ENCODE measurements at regions of chr18 and their contacts with region 1.

Region 1: GRCh38 chr18:9069601-9070000 is 32.9 kb upstream of the NDUFV2 start:
- DNase-seq: no peak
- H3K4me3 ChIP-seq: peak overlapping the region in 3 of 7 experiments; percentile 8 to 54 (median 36)
- H3K27ac ChIP-seq: peak overlapping the region in 1 of 2 experiments; percentile 39
- H3K4me1 ChIP-seq: peaks cover 9 to 31% (median 15%) of the 10 kb centered on the region in 4 experiments
- H3K27me3 ChIP-seq: no peaks in the 10 kb centered on the region

Region 2: GRCh38 chr18:8912348-8913326 is 157.0 kb before region 1 on chr18:
- CTCF ChIA-PET with region 1: no interaction called
- POLR2A ChIA-PET with region 1: no interaction called
- DNase-seq: peak in 1 of 3 donors; percentile 3
- H3K4me3 ChIP-seq: no peak overlapping the region
- H3K27ac ChIP-seq: peak overlapping the region in 1 of 2 experiments; percentile 86
- H3K4me1 ChIP-seq: no peaks in the 10 kb centered on the region
- H3K27me3 ChIP-seq: no peaks in the 10 kb centered on the region

Region 3: DNA sequence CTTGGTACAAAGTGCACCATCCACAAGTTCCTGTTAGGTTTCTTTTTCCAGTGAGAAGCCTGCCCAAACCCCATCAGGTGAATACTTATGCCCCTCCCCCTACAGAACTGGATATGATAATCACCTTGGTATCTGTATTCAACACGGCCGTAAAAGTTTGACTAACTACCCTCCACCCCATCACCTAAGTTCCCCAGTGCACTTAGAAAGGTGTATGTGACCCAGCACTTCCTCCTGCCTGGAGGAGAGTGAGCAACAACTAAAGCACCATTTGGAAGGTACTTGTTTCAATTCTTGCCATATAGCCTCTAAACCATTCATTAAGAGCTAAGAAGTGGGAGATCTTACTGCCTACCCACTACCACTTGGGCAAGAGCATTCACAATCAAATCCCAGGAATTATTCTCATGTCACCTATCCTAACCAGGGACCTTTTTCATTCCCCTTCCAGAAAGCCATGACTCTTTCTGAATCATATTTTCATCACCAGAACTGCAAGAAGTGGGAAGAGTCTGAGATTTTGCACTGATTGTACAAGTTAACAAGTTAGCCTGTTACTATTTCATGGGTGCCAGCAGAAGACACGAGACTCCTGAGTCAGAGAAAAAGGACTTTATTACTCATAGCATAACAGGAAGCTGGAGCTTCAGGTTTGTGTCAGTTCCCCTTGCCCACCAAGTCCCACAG is 20.6 kb before region 1 on chr18:
- CTCF ChIA-PET with region 1: no interaction called
- POLR2A ChIA-PET with region 1: no interaction called
- DNase-seq: no peak
- H3K4me3 ChIP-seq: no peak overlapping the region
- H3K27ac ChIP-seq: no peak overlapping the region
- H3K4me1 ChIP-seq: no peaks in the 10 kb centered on the region
- H3K27me3 ChIP-seq: no peaks in the 10 kb centered on the region

Region 4: GRCh38 chr18:9082711-9083510 is 13.3 kb after region 1 on chr18:
- CTCF ChIA-PET with region 1: interaction called, 12 read pairs
- POLR2A ChIA-PET with region 1: no interaction called
- DNase-seq: peak; percentile 22 to 68 (median 60)
- H3K4me3 ChIP-seq: peak overlapping the region in 4 of 7 experiments; percentile 2 to 42 (median 9)
- H3K27ac ChIP-seq: peak overlapping the region in 1 of 2 experiments; percentile 55
- H3K4me1 ChIP-seq: peaks cover 6 to 49% (median 30%) of the 10 kb centered on the region in 4 experiments
- H3K27me3 ChIP-seq: no peaks in the 10 kb centered on the region

Region 5: GRCh38 chr18:9102508-9103375 is 33.1 kb after region 1 on chr18 and contains the start of gene NDUFV2:
- CTCF ChIA-PET with region 1: interaction called, 12 read pairs
- POLR2A ChIA-PET with region 1: no interaction called
- DNase-seq: peak; percentile 96 to 98 (median 98)
- H3K4me3 ChIP-seq: peak within 1 kb of the TSS; percentile 80 to 97 (median 89)
- H3K27ac ChIP-seq: peak within 1 kb of the TSS; percentile 91 to 97
- H3K4me1 ChIP-seq: peaks cover 36 to 61% (median 54%) of the 10 kb centered on the region in 4 experiments
- H3K27me3 ChIP-seq: no peaks in the 10 kb centered on the region

Region 6: DNA sequence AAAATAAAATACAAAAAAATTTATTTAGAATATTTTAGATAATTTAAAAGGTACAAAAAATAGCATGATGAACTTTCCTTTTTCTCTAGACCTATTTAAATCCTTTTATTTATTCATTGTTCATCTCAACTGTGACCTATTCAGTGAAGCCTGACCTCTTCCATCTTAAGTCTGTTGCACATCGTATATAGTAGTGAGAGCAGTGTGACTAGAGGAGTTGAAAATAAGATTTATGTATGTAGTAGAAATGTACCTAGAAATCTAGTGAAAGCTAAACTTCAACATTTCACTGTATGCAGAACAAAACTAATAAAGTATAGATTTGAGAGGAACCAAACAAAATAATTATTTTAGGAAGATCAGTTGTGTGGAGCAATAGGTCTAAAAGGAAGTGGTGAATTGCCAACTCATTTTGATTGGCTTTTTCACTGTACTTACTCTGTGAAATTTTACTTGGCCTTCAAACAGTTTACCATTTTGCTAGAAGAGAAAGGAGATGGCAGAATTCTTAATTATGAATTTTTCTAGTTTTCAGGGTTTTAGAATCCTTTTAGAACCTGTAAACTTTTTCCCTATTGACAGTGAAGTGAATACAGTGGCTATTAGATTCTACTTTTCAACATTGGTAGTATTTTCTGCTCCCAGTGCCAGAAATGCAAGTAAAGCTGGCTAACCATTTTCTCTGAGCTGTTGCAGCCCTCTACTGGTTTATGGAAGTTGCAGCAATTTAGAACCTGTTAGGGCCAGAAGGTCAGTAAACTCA is 78.0 kb after region 1 on chr18:
- CTCF ChIA-PET with region 1: interaction called, 20 read pairs
- POLR2A ChIA-PET with region 1: no interaction called
- DNase-seq: peak; percentile 71 to 76 (median 75)
- H3K4me3 ChIP-seq: peak overlapping the region in 3 of 7 experiments; percentile 31 to 42 (median 36)
- H3K27ac ChIP-seq: peak overlapping the region; percentile 7 to 68
- H3K4me1 ChIP-seq: peaks cover 20 to 76% (median 46%) of the 10 kb centered on the region in 4 experiments
- H3K27me3 ChIP-seq: no peaks in the 10 kb centered on the region